Panc1 (cell line): ENCODE measurements at regions of chr22 and their contacts with region 1.

Region 1: DNA sequence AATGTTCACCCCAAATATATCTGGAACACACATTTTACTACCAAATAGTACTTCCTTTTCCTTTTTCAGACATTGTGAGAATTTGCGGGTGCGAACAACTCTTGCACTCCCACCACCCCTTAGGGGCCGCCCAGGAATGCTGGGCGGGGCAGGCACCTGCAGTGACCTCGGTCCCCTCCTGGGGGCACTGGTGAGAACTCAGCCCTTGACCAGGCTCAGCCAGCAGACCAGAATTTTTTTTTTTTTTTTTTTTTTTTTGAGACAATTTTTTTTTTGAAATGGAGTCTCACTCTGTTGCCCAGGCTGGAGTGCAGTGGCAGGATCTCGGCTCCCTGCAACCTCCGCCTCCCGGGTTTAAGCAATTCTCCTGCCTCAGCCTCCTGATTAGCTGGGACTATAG is 75.8 kb downstream of the ARHGAP8 start:
- DNase-seq: no peak
- ATAC-seq: peak; percentile 85
- H3K4me3 ChIP-seq: no peak overlapping the region
- H3K27ac ChIP-seq: no peak overlapping the region
- H3K4me1 ChIP-seq: no peaks in the 10 kb centered on the region
- H3K27me3 ChIP-seq: no peaks in the 10 kb centered on the region
- CTCF ChIP-seq: peak; percentile 80

Region 2: DNA sequence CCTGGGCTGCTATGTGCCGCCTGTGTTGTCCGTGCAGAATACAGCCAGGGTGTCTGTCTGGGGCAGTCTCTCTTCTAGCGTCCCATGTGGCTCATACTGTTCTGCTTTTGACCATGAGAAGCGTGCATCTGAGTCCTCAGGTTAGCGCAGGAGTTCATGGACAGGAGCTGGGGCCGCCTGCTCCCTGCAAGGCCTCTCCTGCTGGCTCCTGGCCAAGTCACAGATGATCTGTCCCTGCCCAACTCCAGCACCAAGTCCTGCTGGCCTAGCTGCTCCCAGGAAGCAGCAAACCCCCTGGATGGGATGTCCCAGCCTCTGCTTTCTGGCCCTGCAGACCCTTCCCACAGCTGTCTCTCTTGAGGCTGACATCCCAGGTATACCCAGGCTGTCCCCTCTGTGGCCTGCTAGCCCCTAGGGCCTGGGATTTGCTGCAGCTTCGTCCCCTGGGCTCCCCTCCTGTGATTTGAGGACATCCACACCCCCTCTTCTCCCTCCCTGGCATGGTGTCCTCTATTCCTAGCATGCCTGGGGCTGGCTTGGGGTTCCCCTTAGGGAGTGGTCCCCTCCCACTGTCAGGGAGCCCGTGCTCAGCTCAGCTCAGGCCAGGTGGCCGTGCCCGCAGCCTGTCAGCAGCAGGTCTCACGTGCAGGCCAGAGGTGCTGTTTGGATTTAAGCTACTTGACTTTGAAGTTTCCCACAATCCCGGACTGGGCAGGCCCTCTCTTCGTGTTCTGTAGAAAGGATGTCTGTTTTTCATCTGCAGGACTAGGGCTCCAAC is 108.4 kb before region 1 on chr22:
- CTCF ChIA-PET with region 1: no interaction called
- POLR2A ChIA-PET with region 1: no interaction called
- in situ Hi-C with region 1: no loop called
- intact Hi-C with region 1: no loop called
- DNase-seq: no peak
- ATAC-seq: no peak
- H3K4me3 ChIP-seq: no peak overlapping the region
- H3K27ac ChIP-seq: no peak overlapping the region
- H3K4me1 ChIP-seq: no peaks in the 10 kb centered on the region
- H3K27me3 ChIP-seq: no peaks in the 10 kb centered on the region
- CTCF ChIP-seq: no peak

Region 3: GRCh38 chr22:44786136-44786535 is 42.1 kb before region 1 on chr22:
- CTCF ChIA-PET with region 1: no interaction called
- POLR2A ChIA-PET with region 1: no interaction called
- in situ Hi-C with region 1: no loop called
- intact Hi-C with region 1: no loop called
- DNase-seq: no peak
- ATAC-seq: 0 out of 2 replicates have a peak, but pooled peaks have one; percentile 24
- H3K4me3 ChIP-seq: no peak overlapping the region
- H3K27ac ChIP-seq: no peak overlapping the region
- H3K4me1 ChIP-seq: no peaks in the 10 kb centered on the region; the same call in 1 of the 2 replicates
- H3K27me3 ChIP-seq: no peaks in the 10 kb centered on the region
- CTCF ChIP-seq: no peak

Region 4: DNA sequence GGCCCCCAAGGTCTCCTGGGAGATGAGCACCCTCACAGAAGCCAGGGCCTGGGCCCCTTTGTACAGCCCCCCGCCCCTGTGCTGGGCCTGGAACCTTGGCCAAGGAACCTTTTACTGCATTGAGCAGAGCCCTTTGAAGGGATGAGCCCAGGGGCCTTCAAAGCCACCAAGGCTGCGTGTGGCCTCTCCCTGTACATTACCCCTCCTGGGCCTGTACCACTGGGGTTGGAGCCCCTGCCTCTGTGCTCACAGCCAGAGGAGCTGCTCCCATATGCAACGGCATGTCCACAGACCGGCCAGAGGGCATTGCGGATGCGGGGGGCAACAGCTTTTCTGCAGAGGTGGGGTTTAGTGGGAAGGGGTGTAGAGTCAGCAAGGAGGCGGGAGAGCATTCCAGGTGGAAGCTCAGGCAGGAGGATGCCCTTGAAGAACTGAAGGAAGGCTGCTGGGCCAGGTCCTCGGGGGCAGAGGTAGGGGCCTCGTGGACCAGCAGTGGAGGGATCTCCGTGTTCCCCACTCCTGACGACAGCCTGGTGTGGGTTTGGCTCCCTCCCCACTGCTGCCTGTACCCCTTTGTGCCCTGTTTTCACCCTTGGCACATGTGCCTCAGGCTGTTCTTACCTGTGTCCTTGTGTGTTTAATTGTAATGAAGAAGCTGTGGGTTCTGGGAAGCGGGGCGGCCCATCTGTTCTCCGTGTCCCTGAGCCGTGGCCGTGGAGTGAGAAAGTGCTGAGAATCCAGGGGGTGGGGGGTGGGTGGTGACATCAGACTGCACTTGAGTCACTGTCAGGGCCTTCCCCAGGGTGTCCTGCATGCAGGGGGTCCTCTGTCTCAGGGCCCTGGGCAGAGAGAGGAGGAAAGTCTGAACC is 28.9 kb before region 1 on chr22:
- CTCF ChIA-PET with region 1: no interaction called
- POLR2A ChIA-PET with region 1: interaction called, 14 read pairs
- in situ Hi-C with region 1: no loop called
- intact Hi-C with region 1: no loop called
- DNase-seq: no peak
- ATAC-seq: peak; percentile 52; the same call in 1 of the 2 replicates
- H3K4me3 ChIP-seq: no peak overlapping the region
- H3K27ac ChIP-seq: no peak overlapping the region
- H3K4me1 ChIP-seq: no peaks in the 10 kb centered on the region
- H3K27me3 ChIP-seq: no peaks in the 10 kb centered on the region
- CTCF ChIP-seq: no peak

Region 5: DNA sequence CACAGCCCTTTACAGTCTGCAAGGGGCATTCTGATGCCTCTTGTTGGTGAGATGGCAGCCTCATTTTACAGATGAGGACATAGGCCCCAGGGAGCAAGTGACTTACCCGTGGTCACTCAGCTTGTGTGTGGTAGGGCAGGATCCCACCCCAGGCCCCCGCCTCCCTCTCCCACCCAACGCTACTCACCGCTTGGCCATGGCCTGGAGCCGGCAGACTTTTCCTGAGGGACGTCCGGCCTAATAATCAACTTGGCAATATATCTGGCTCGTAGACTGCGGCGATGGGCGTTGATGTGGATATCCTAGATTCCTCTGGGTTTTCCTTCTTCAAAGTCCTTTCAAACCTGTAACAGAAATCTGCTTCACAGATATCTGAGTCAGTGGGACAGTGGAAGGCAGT is 18.7 kb before region 1 on chr22:
- CTCF ChIA-PET with region 1: no interaction called
- POLR2A ChIA-PET with region 1: no interaction called
- in situ Hi-C with region 1: no loop called
- intact Hi-C with region 1: no loop called
- DNase-seq: no peak
- ATAC-seq: no peak
- H3K4me3 ChIP-seq: no peak overlapping the region
- H3K27ac ChIP-seq: no peak overlapping the region
- H3K4me1 ChIP-seq: no peaks in the 10 kb centered on the region
- H3K27me3 ChIP-seq: no peaks in the 10 kb centered on the region
- CTCF ChIP-seq: no peak

Region 6: GRCh38 chr22:44968736-44969135 is 140.5 kb after region 1 on chr22:
- CTCF ChIA-PET with region 1: no interaction called
- POLR2A ChIA-PET with region 1: no interaction called
- in situ Hi-C with region 1: no loop called
- intact Hi-C with region 1: loop called (anchors 10 kb)
- DNase-seq: no peak
- ATAC-seq: no peak
- H3K4me3 ChIP-seq: no peak overlapping the region
- H3K27ac ChIP-seq: no peak overlapping the region
- H3K4me1 ChIP-seq: no peaks in the 10 kb centered on the region
- H3K27me3 ChIP-seq: no peaks in the 10 kb centered on the region
- CTCF ChIP-seq: no peak